ENCODE measurements at regions of chr2 and their contacts with region 1.

Region 1: GRCh38 chr2:219057709-219058540 is 2.8 kb downstream of the IHH start:
- DNase-seq: no peak
- H3K4me3 ChIP-seq: peak overlapping the region; percentile 3 to 29 (median 26)
- H3K27ac ChIP-seq: no peak overlapping the region
- H3K4me1 ChIP-seq: peaks cover 38 to 45% (median 43%) of the 10 kb centered on the region in 4 donors
- H3K27me3 ChIP-seq: peaks cover 10 to 92% (median 52%) of the 10 kb centered on the region in 4 donors
- CTCF ChIP-seq: peak in 2 of 3 experiments; percentile 90 to 91
- EP300 ChIP-seq: no peak
- POLR2A ChIP-seq: no peak

Region 2: DNA sequence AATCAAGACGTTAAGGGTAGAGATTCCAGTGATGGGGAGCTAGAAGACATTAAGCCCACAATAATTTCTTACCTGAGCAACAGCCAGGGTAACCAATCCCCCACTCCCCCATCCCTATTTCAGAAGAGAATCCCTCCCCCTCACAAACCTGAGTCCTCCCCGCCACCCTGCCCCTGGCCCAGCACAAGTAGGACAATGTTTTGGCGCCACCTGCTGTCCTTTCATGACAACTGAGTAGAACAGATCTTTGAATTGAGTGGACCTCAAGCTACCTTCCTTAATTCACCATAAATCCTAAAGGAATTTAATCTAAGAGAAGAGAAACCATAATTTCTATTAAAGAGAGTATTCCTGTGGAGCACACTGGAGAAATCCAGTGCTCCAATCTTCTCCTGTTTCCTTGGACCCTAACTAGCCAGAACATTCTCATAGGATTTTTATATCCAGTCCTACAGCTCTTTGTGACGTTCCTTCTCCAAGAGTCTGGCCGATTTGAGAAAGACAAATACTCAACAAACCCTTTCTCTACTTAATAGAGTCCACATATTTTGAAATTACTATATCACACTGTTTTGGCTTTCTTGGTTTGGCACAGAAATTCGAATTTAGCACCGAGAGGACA is 61.6 kb after region 1 on chr2:
- intact Hi-C with region 1: loop called (anchors 5 kb)
- DNase-seq: no peak
- H3K4me3 ChIP-seq: no peak overlapping the region
- H3K27ac ChIP-seq: no peak overlapping the region
- H3K4me1 ChIP-seq: peaks cover 0 to 5% (median 1%) of the 10 kb centered on the region in 4 donors
- H3K27me3 ChIP-seq: no peaks in the 10 kb centered on the region
- CTCF ChIP-seq: peak; percentile 55 to 71 (median 62)
- EP300 ChIP-seq: no peak
- POLR2A ChIP-seq: no peak

Region 3: DNA sequence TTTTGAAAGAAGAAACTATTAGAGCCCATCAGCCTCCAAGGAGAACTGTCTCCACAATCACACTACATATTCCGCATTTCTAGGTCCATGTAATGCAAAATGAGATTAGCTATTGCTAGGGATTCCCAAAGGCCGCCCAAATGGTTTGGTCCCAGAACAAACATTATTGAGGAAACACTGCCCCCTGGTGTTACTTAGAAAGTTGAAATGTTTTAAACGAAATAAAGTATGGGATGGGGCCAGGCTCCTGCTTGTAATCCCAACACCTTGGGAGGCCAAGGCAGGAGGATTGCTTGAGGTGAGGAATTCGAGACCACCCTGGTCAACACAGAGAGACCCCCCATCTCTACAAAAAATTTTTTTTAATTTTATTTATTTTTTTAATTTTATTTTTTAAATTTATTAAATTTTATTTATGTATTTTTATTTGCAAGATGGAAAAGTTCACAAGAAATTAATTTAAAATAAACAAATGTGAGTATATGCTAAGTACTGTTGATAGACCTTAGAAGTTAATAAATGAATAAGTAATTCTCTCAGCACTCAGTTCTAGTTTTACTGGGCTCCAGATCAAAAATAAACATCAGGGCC is 97.2 kb after region 1 on chr2:
- intact Hi-C with region 1: loop called (anchors 2 kb)
- DNase-seq: no peak
- H3K4me3 ChIP-seq: no peak overlapping the region
- H3K27ac ChIP-seq: no peak overlapping the region
- H3K4me1 ChIP-seq: peaks cover 4 to 8% (median 6%) of the 10 kb centered on the region in 4 donors
- H3K27me3 ChIP-seq: no peaks in the 10 kb centered on the region
- CTCF ChIP-seq: peak; percentile 55 to 67 (median 58)
- EP300 ChIP-seq: no peak
- POLR2A ChIP-seq: no peak

Region 4: DNA sequence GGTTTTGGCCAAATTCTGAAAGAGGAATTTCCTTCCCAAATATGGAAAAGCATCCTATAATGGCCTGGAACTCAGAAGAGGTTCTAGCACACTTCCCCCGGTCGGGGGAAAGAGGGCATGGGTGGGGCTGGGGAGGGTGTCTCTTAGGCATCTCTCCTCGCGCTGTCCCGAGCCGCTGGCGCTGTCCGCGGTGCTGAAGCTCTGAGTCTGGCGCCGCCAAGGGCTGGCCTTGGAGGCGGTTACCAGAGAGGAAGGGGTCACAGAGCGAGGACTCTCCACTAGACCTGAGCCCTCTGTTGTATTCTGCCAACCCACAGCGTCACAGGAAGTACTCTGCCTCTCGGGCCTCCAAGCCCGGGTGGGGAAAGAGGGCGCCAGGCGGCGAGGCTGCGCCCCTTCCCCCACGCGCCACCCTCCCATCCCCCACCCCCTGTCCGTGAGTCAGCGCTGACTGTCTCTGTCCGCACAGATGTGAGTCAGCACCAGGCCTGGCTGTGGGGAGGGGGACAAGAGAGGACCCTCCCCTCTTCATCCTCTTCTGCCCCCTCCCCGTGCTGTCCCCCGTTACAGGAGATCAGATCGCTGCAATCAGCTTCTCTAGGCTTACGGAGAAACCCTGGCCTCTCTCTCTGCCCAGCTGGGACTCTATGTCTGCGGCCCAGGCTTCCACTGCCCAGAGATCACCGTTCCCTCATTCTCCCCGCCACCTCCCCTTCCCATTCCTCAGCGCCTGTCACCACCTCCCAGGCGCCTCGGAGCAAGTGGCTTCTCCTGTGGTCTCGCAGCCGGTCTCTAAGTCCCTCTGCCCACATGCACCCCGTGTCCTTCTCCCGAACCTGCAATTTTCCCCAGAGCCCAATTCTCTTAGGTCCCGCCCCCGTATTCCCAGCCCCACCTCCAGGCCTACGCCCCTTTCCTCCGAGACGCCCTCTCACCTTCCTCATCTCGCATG is 250.5 kb after region 1 on chr2:
- intact Hi-C with region 1: loop called (anchors 10 kb)
- DNase-seq: no peak
- H3K4me3 ChIP-seq: no peak overlapping the region
- H3K27ac ChIP-seq: no peak overlapping the region
- H3K4me1 ChIP-seq: peaks cover 0 to 13% (median 11%) of the 10 kb centered on the region in 4 donors
- H3K27me3 ChIP-seq: peaks cover 0 to 77% (median 22%) of the 10 kb centered on the region in 4 donors
- CTCF ChIP-seq: no peak
- EP300 ChIP-seq: no peak
- POLR2A ChIP-seq: no peak